Activated CD4-positive, alpha-beta T cell treated with anti-CD3 and anti-CD28 coated beads for 36 hours (primary cell): ENCODE measurements at regions of chr6 and their contacts with region 1.

Region 1: DNA sequence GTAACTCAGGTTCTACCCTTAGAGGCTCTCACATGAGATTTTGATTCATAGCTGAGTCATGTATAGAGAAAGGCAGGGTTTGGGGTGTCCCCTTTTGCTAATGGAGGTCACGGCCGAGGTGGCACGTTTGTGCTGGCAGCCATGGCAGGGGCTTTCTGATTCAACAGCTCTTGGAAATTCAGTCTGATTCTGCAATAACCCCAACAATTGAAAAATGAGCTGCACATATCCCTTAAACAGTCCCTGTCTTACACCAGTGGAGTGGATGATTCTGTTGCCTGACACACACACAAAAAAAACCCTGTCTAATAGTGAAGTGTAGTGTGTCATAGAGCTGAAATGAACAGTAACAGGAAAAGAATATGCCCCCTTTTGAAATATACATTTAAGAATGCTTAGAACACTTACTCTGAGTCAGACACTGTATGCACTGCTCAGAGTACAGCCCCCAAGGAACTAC is 40.4 kb upstream of the ARG1 start:
- DNase-seq: peak; percentile 81
- ATAC-seq: peak; percentile 94
- H3K4me3 Mint-ChIP-seq: no peak overlapping the region
- H3K27ac Mint-ChIP-seq: peak overlapping the region; percentile 81
- H3K4me1 Mint-ChIP-seq: peaks cover 51% of the 10 kb centered on the region
- H3K27me3 Mint-ChIP-seq: no peaks in the 10 kb centered on the region

Region 2: DNA sequence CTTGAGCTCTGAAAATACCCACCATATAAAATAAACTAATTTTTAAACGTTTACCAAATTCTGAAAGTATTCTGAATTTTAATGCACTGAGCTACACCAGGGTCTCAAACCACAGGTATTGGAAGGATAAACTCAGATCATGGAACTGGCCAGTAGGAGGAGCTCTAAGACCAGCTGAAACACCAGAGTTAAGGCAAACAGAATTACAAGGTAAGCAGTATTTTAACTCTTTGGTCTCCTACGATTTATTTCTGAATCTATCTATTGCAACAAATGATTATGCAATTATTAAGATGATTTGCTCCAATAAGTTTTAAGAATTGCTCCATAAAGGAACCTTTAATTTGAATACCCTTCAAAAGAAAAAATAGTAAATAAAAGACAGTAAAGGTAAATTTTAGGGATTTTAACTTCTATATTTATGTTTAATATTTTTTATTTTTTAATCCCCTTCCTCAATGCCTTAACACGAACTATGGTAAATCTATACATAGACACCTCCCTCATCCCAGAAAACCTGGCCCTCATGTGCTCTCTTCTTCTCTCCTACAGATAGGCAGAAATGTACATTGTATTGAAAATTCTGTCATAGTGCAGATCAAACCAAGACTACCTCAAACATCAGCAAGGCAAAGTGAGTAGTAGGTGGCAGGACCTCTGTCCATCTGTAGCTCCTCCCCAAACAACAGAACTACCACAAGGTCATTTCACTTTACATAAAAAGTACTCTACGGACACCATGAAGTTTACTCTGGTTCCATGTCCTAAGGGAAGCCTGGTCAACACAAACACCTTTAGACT is 647.0 kb before region 1 on chr6:
- CTCF ChIA-PET with region 1: interaction called, 33 read pairs
- POLR2A ChIA-PET with region 1: no interaction called
- intact Hi-C with region 1: loop called (anchors 1 to 2 kb)
- DNase-seq: peak; percentile 80
- ATAC-seq: peak; percentile 76
- H3K4me3 Mint-ChIP-seq: no peak overlapping the region
- H3K27ac Mint-ChIP-seq: no peak overlapping the region
- H3K4me1 Mint-ChIP-seq: no peaks in the 10 kb centered on the region
- H3K27me3 Mint-ChIP-seq: no peaks in the 10 kb centered on the region

Region 3: GRCh38 chr6:131116749-131117360 is 415.8 kb before region 1 on chr6:
- CTCF ChIA-PET with region 1: interaction called, 7 read pairs
- POLR2A ChIA-PET with region 1: no interaction called
- intact Hi-C with region 1: loop called in 1 of 2 experiments (anchors 2 kb)
- DNase-seq: no peak
- ATAC-seq: no peak
- H3K4me3 Mint-ChIP-seq: no peak overlapping the region
- H3K27ac Mint-ChIP-seq: no peak overlapping the region
- H3K4me1 Mint-ChIP-seq: no peaks in the 10 kb centered on the region
- H3K27me3 Mint-ChIP-seq: no peaks in the 10 kb centered on the region

Region 4: DNA sequence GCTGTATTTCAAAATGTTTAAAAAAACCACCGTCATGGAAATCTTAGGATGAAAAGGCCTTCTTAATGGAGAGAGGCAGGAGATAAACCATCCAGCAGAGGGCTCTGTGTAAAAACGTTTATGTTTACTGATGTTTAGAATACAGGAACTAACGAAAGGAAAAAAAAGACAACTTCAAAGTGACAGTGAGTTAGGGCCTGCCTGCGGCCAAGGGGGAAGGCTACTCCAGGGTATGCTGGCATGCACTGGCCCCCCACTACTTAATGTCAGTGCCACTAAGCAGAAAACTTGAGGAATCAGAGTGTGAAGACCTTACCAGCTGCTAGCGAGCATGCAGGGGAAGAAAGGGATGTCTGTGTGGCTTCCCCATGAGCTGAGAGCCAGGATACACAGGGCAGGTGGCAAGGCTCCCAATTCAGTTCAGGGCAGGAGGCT is 349.6 kb before region 1 on chr6:
- CTCF ChIA-PET with region 1: interaction called, 36 read pairs
- POLR2A ChIA-PET with region 1: no interaction called
- intact Hi-C with region 1: loop called (anchors 1 kb)
- DNase-seq: peak; percentile 30
- ATAC-seq: peak; percentile 66
- H3K4me3 Mint-ChIP-seq: peak overlapping the region; percentile 42
- H3K27ac Mint-ChIP-seq: peak overlapping the region; percentile 87
- H3K4me1 Mint-ChIP-seq: peaks cover 10% of the 10 kb centered on the region
- H3K27me3 Mint-ChIP-seq: no peaks in the 10 kb centered on the region

Region 5: DNA sequence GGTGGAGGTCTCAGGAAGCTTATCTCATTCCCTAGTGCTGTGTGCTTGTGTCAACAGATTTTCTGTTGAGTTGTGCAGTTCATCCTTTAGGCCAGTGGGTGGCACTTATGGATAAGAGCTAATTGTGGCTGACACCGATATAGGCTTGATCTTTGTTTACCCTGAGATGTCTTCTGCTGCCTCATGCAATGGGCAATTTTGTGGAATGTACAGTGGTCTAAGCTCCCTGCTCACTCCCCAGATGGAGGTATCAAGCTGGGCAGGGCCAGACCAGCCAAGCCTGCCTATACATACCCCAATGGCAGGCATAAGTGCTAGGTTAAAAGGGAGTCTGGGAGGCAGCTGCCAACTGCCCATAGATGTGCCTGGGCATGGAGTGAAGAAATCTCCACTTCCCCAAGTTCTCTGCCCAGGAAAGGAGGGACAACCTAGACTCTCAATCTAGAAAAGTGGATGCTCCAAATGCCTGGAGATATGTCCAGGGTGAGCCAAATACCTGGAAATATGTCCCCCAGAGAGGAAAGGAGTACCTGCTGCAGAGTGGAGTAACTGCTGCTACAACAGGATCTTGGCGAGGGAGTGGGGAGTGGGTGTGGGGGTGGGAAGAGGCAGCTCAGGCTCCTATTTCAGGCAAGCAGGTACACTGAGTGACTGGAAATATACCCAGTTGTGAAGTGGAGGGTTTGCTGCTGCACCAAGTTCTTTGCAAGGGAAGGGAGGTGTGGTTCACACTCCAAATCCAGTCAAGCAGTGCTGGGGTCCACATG is 12.8 kb before region 1 on chr6:
- CTCF ChIA-PET with region 1: interaction called, 53 read pairs
- POLR2A ChIA-PET with region 1: interaction called, 5 read pairs
- intact Hi-C with region 1: loop called (anchors 1 kb)
- DNase-seq: peak; percentile 65
- ATAC-seq: peak; percentile 94
- H3K4me3 Mint-ChIP-seq: no peak overlapping the region
- H3K27ac Mint-ChIP-seq: no peak overlapping the region
- H3K4me1 Mint-ChIP-seq: peaks cover 9% of the 10 kb centered on the region
- H3K27me3 Mint-ChIP-seq: no peaks in the 10 kb centered on the region